Activated naive CD4-positive, alpha-beta T cell treated with anti-CD3 and anti-CD28 coated beads, Interleukin-2, amount 10 ng/mL, durations not matched to agents 7 days and 5 days (primary cell): ENCODE measurements at regions of chr7 and their contacts with region 1.

Region 1: GRCh38 chr7:128425850-128426249 is 16.1 kb upstream of the IMPDH1 start:
- DNase-seq: peak; percentile 87
- H3K4me3 Mint-ChIP-seq: no peak overlapping the region
- H3K27ac Mint-ChIP-seq: no peak overlapping the region
- H3K4me1 Mint-ChIP-seq: peaks cover 7% of the 10 kb centered on the region
- H3K27me3 Mint-ChIP-seq: peaks cover 33% of the 10 kb centered on the region

Region 2: DNA sequence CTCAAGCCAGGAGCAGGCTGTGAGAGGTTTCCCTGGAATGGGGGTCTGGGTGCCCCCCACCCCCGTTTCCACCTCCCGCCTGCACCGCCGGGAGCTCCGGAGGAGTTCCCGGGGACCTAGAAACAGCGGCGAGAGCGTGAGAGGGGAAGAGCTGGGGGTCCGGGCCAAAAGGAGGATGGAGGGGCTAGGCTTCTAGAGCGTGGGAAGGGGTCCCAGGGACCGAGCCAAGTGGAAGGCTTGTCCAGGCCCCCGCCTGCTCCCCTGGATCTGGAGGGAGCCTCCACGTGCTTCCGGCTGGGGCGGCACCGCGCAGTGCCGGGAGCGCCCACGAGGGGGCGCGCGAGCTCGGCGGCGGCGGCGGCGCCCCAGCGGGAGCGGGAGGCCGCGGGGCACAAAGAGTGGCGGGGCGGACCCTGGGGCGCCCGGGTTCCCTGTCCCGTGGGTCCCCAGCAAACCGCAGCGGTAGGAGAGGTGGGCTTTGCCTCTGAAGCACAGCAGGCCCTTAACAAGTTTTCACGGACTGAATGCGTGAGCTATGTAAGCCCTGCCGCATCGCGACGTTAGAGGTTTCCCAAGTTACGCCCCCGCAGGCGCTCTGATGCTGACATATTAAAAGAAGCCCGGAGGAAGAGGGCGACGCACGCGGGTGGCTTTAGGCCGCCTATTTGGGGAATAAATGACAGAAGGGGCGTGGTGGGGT is 290.2 kb before region 1 on chr7:
- CTCF ChIA-PET with region 1: no interaction called
- DNase-seq: peak; percentile 63
- H3K4me3 Mint-ChIP-seq: peak overlapping the region; percentile 68
- H3K27ac Mint-ChIP-seq: no peak overlapping the region
- H3K4me1 Mint-ChIP-seq: peaks cover 14% of the 10 kb centered on the region
- H3K27me3 Mint-ChIP-seq: peaks cover 65% of the 10 kb centered on the region

Region 3: GRCh38 chr7:128381161-128381821 is 44.6 kb before region 1 on chr7:
- CTCF ChIA-PET with region 1: interaction called, 51 read pairs
- DNase-seq: peak; percentile 54
- H3K4me3 Mint-ChIP-seq: no peak overlapping the region
- H3K27ac Mint-ChIP-seq: no peak overlapping the region
- H3K4me1 Mint-ChIP-seq: no peaks in the 10 kb centered on the region
- H3K27me3 Mint-ChIP-seq: peaks cover 22% of the 10 kb centered on the region

Region 4: DNA sequence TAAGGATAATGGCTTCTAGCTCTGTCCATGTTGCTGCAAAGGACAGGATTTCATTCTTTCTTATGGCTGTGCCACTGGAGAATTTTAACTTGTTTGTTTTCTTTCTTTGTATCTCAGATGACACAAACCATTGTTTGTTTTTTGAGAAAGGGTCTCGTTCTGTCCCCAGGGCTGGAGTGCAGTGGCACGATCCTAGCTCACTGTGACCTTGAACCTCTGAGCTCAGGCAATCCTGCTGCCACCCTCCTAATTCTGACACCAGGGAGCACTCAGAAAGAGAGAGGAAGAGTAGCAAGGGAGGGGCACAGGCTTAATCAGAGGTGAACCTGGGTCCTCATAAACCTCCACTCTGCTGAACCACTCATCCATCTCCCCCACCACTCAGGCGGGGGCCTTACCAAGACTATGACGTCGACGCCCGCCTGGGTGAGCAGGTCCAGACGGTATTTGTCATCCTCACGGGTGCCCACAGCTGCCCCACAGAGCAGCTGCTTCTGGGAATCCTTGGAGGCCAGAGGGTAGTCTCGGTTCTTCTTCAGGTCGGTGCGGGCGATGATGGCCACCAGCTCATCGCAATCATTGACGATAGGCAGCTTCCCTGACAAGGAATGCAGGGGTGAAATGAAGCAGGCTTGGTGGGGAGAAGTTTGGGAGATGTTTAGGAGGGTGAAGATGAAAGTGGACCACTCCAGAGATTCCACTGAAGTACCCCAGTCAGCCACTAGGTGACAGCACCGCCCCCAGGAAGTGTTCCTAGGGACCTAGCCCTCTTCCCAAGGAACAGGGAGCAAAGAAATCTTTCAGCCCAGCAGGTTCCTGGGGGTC is 27.6 kb before region 1 on chr7:
- CTCF ChIA-PET with region 1: interaction called, 164 read pairs
- DNase-seq: peak; percentile 62
- H3K4me3 Mint-ChIP-seq: no peak overlapping the region
- H3K27ac Mint-ChIP-seq: no peak overlapping the region
- H3K4me1 Mint-ChIP-seq: peaks cover 6% of the 10 kb centered on the region
- H3K27me3 Mint-ChIP-seq: no peaks in the 10 kb centered on the region

Region 5: DNA sequence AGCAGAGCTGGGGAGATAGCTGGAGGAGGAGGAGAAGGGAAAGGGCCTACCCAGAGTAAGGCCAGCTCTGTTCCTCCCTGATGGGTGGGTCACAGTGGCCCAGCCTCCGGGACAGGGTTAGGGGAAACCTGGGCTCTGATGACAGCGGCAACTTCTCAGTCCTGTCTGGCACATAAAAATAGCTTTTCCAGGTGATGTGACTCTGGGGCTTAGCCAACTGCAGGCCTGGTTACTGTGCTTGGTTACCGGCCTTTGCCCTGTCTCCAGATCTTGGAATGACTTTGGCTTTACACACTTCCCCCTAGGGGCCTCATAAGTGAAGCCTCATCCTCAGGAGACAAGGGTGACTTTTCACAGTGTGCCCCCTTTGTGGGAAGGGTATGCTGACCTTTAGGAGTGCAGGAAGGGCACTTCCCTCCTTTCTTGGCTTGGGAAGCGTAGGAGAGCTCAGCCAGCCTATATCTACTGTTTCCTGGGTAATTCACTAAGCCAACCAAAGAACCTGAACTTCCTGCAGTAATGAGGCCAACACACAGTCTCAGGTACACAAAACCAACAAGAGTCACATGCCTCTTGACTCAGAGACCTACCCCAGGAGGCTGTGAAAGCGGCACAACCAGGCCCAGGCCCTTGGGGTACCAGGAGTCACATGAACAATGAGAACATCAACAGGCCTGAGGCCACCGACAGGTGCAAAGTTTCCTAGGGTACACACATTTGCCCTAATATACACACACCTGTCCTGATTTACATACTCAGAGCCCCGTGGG is 18.2 kb after region 1 on chr7:
- CTCF ChIA-PET with region 1: interaction called, 26 read pairs
- DNase-seq: no peak
- H3K4me3 Mint-ChIP-seq: no peak overlapping the region
- H3K27ac Mint-ChIP-seq: no peak overlapping the region
- H3K4me1 Mint-ChIP-seq: no peaks in the 10 kb centered on the region
- H3K27me3 Mint-ChIP-seq: peaks cover 11% of the 10 kb centered on the region

Region 6: GRCh38 chr7:128455551-128456254 is 29.9 kb after region 1 on chr7 and contains the start of gene HILPDA:
- CTCF ChIA-PET with region 1: interaction called, 339 read pairs
- DNase-seq: peak; percentile 95
- H3K4me3 Mint-ChIP-seq: peak within 1 kb of the TSS; percentile 88
- H3K27ac Mint-ChIP-seq: peak within 1 kb of the TSS; percentile 96
- H3K4me1 Mint-ChIP-seq: peaks cover 57% of the 10 kb centered on the region
- H3K27me3 Mint-ChIP-seq: peaks cover 35% of the 10 kb centered on the region